ENCODE measurements at regions of chr20 and their contacts with region 1.

Region 1: DNA sequence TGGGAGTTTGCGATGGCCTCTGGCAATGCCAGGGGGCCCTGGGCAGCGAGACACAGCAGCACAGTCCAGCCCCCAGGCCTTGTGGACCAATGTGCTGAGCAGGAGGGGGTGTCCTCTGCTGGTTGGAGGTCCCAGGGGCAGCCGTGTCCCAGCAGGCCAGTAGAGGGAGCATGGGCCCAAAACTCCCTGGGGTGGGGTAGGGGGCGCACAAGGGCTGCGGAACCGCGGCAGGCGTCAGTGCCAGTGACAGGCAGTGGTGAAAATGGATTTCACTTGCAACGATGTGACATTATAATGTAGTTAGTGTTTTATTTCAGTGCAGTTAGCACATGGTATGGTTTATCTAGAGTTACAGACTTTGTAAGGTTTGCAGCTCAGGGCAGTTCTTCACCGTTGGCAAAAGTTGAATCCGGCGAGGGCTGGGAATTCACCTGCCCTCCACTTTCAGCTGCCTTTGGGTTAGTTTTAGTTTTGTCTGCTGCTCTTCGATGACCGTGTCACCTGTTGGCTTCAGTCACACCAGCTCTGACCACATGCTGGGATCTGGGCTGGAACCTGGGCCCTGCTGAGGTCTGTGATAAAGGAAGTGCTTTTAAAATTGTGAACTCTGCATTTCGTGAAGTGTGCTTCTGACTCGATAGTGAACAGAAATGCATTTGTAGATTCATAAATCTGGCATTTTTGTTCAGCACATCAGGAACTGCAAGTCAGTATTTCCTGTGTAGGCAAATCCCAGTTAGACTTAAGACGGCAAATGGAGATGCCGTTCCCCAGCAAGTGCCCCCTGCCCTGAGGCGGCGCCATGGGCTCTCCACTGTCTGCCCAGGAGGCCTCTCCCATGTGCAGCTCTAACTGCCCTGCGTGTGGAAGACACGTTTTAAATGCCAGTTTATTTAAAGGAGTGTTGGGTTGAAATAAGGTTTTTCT is 46.8 kb downstream of the PYGB start:
- DNase-seq: peak; percentile 47 to 87
- H3K4me3 ChIP-seq: no peak overlapping the region
- H3K27ac ChIP-seq: no peak overlapping the region
- H3K4me1 ChIP-seq: peaks cover 0 to 7% (median 2%) of the 10 kb centered on the region in 4 experiments; a peak in 3 of 7 replicates
- H3K27me3 ChIP-seq: no peaks in the 10 kb centered on the region; a peak in 1 of 7 replicates
- CTCF ChIP-seq: peak; percentile 99 to 100 (median 100)
- EP300 ChIP-seq: no peak
- POLR2A ChIP-seq: no peak
- RAD21 ChIP-seq: peak; percentile 85 to 87

Region 2: DNA sequence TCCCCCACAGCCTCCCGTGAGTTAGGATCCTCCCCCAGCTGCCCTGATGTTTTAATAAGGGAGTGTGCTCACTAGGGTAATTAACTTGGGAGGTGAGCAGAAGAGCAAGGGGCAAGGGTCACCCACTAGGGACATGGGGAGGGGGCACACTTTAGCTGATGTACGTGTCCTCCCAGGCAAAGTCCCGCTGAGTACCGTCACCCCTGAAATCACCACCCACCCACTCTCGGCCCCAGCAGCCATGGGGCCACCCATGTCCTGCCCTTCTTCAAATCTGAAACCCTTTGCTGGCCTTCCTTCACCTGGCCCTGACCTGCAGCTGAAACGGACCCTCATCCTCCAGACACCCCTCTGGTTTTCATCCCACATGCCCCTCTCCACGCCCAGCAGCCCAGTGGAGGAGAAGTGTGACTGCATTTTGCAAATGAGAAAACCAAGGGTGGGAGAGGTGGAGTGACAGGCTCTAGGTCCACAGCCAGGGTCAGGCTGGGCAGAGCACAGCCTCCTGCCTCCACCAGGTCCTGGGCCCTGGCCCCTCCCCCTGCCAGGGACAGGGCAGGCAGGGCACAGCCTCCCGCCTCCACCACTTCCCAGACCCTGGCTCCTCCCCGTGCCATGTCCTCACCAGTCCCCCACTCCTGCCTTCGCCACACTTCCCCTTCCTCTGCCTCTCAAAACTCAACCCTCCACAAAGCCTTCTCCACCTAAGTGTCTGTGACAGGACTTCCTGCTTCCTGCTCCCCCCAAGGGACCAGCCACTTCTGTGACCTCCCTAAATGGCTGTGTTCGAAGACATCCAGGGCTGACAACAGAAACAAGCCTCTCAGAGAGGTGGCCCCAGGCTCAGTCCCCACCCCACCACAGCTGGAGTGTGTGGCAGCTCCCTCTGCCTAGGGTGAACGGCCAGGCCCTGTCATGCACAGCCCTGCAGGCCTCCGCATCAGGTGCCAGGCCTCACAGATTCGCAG is 251.9 kb before region 1 on chr20:
- CTCF ChIA-PET with region 1: no interaction called
- POLR2A ChIA-PET with region 1: no interaction called
- DNase-seq: no peak
- H3K4me3 ChIP-seq: no peak overlapping the region
- H3K27ac ChIP-seq: no peak overlapping the region
- H3K4me1 ChIP-seq: no peaks in the 10 kb centered on the region; a peak in 1 of 7 replicates
- H3K27me3 ChIP-seq: no peaks in the 10 kb centered on the region; a peak in 1 of 7 replicates
- CTCF ChIP-seq: no peak
- EP300 ChIP-seq: no peak
- POLR2A ChIP-seq: no peak
- RAD21 ChIP-seq: no peak

Region 3: GRCh38 chr20:25280051-25280573 is 14.6 kb before region 1 on chr20:
- CTCF ChIA-PET with region 1: interaction called, 30 read pairs
- POLR2A ChIA-PET with region 1: interaction called, 3 read pairs
- DNase-seq: peak in 1 of 2 experiments; percentile 37
- H3K4me3 ChIP-seq: no peak overlapping the region
- H3K27ac ChIP-seq: no peak overlapping the region
- H3K4me1 ChIP-seq: no peaks in the 10 kb centered on the region
- H3K27me3 ChIP-seq: no peaks in the 10 kb centered on the region
- CTCF ChIP-seq: no peak
- EP300 ChIP-seq: no peak
- POLR2A ChIP-seq: no peak
- RAD21 ChIP-seq: no peak

Region 4: GRCh38 chr20:25318471-25319240 is 23.9 kb after region 1 on chr20:
- CTCF ChIA-PET with region 1: interaction called, 16 read pairs
- POLR2A ChIA-PET with region 1: no interaction called
- DNase-seq: no peak
- H3K4me3 ChIP-seq: no peak overlapping the region
- H3K27ac ChIP-seq: no peak overlapping the region
- H3K4me1 ChIP-seq: peaks cover 0 to 1% (median 0%) of the 10 kb centered on the region in 4 experiments; a peak in 1 of 7 replicates
- H3K27me3 ChIP-seq: no peaks in the 10 kb centered on the region
- CTCF ChIP-seq: no peak
- EP300 ChIP-seq: no peak
- POLR2A ChIP-seq: no peak
- RAD21 ChIP-seq: no peak

Region 5: DNA sequence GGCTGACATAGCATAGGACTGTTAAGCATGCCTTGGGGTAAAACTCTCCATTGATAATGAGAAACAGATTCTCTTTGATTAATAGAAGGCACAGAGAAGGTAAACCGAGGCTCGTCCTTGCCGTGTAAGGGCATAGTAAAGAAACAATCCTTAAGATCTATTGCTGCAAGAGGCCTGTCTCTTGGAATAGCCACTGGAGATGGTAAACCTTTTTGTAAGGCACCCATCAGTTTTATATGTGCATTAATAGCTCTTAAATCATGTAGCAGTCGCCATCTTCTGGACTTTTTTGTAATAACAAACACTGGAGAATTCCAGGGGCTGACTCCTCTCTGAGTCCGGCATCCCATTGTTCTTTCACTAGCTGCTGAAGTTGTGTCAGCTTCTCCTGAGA is 104.3 kb after region 1 on chr20:
- CTCF ChIA-PET with region 1: interaction called, 79 read pairs
- POLR2A ChIA-PET with region 1: interaction called, 8 read pairs
- DNase-seq: no peak
- H3K4me3 ChIP-seq: no peak overlapping the region
- H3K27ac ChIP-seq: no peak overlapping the region
- H3K4me1 ChIP-seq: no peaks in the 10 kb centered on the region; a peak in 1 of 7 replicates
- H3K27me3 ChIP-seq: no peaks in the 10 kb centered on the region
- CTCF ChIP-seq: peak in 2 of 3 experiments; percentile 51 to 62; a peak in 3 of 4 replicates
- EP300 ChIP-seq: no peak
- POLR2A ChIP-seq: no peak
- RAD21 ChIP-seq: peak; percentile 81 to 82